ENCODE measurements at regions of chr11 and their contacts with region 1.

Region 1: DNA sequence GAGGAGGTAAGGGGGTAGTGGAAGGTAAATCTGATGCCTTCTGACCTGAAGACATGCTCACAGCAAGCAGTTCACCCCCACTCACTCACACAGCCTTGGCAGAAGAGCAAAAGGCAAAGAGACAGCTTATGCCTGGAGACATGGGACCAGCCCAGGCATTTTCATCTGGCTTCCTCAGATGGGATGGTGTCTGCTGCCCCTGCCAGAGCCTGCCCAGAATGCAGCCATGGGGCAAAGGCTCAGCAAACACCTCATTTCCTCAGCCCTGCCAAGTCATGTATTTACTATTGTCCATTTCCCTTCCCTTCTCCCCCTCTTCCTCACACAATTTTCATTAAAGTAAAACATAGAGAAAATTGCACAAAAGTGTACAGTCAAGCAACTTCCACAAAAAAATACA is 7.7 kb upstream of the FADD start:
- DNase-seq: no peak
- H3K4me3 ChIP-seq: no peak overlapping the region
- H3K27ac ChIP-seq: no peak overlapping the region
- H3K4me1 ChIP-seq: peaks cover 0 to 13% (median 4%) of the 10 kb centered on the region in 6 donors
- H3K27me3 ChIP-seq: peaks cover 0 to 37% (median 7%) of the 10 kb centered on the region in 7 donors
- CTCF ChIP-seq: no peak
- POLR2A ChIP-seq: no peak

Region 2: DNA sequence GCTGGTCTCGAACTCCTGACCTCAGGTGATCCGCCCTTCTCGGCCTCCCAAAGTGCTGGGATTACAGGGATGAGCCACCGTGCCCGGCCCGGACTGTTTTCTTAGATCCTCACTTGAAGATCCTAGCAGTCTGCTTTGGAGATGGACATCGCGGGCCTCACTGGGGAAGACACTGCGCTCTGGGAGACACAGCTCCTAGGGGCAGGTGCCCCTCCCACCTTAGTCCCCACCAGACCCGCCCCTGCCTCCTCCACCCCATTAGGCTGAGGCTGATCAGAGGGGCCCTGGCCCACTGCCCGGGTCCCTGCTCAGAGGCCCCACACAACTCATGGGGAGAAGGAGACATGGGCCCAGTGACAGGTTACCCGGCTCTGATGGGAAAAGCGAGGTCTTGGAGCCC is 508.9 kb before region 1 on chr11:
- intact Hi-C with region 1: loop called (anchors 5 kb)
- DNase-seq: peak; percentile 67
- H3K4me3 ChIP-seq: no peak overlapping the region
- H3K27ac ChIP-seq: no peak overlapping the region
- H3K4me1 ChIP-seq: peaks cover 0 to 11% (median 9%) of the 10 kb centered on the region in 6 donors
- H3K27me3 ChIP-seq: peaks cover 0 to 59% (median 15%) of the 10 kb centered on the region in 7 donors
- CTCF ChIP-seq: no peak
- POLR2A ChIP-seq: no peak

Region 3: DNA sequence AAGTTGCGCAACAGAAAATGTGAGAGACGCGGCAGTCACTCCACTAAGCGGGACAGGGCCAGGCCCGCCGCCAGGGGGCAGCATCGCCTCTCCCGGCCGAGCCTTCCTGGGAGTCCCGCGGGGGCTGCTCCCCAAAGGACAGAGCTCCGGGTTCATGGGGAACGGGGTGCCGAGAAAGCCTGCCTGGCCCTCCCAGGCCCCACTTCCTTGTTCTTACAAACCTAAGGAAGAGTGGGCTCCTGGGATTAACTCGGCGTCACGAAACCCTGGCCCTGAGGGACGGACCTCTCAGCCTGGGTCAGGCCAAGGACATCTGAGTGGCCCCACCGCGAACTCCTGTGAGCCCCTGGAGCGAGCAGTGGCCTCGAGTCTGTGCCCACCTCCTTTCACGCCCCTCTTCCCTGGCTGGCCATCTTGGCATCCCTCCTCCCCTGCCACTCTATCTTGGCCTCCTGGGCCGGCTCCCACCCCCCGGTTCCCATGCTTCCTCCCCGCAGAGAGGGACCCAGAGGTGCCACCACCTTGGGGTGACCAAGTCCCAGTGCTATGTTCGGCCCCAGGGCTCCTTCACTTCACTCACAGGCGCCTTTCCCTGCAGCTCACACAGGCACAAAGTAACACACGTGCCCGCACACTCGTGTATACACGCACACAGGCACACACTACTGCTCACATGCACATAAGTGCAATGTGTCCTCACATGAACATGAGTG is 276.3 kb before region 1 on chr11:
- intact Hi-C with region 1: loop called (anchors 5 kb)
- DNase-seq: peak; percentile 87
- H3K4me3 ChIP-seq: no peak overlapping the region
- H3K27ac ChIP-seq: no peak overlapping the region
- H3K4me1 ChIP-seq: peaks cover 0 to 28% (median 18%) of the 10 kb centered on the region in 6 donors
- H3K27me3 ChIP-seq: peaks cover 0 to 90% (median 21%) of the 10 kb centered on the region in 7 donors
- CTCF ChIP-seq: peak; percentile 46 to 92 (median 85)
- POLR2A ChIP-seq: no peak

Region 4: GRCh38 chr11:70158201-70158600 is 37.2 kb before region 1 on chr11:
- intact Hi-C with region 1: no loop called
- DNase-seq: no peak
- H3K4me3 ChIP-seq: no peak overlapping the region
- H3K27ac ChIP-seq: no peak overlapping the region
- H3K4me1 ChIP-seq: no peaks in the 10 kb centered on the region
- H3K27me3 ChIP-seq: peaks cover 0 to 23% (median 0%) of the 10 kb centered on the region in 7 donors
- CTCF ChIP-seq: no peak
- POLR2A ChIP-seq: no peak

Region 5: DNA sequence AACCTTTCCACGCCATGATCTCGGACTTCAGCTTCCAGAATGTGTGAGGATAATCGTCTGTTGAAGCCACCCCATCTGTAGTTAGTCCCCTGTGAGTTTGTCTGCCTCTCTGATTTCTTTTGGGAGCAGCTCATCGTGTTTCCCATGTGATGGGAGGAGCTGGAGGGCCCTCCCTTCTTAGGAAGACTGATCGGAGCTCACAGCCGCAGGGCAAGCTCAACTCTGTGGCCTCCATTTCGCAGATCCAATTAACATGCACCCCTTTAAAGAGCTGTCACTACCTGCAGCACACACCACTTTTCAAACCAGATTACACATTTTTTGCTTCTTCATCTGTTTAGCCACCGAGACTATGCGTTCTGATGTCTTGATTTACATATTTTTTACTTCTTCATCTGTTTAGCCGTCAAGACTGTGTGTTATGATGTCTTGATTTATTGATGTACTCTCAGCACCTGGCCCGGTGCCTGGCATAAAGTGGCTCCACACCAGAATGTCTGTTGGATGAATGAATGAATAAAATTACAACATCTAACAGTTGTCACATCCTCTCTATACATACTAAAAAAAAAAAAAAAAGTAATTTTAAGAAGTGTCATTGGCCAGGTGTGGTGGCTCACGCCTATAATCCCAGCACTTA is 60.2 kb after region 1 on chr11:
- intact Hi-C with region 1: no loop called
- DNase-seq: no peak
- H3K4me3 ChIP-seq: no peak overlapping the region
- H3K27ac ChIP-seq: no peak overlapping the region
- H3K4me1 ChIP-seq: peaks cover 0 to 6% (median 0%) of the 10 kb centered on the region in 6 donors
- H3K27me3 ChIP-seq: peaks cover 0 to 21% (median 0%) of the 10 kb centered on the region in 7 donors
- CTCF ChIP-seq: no peak
- POLR2A ChIP-seq: no peak

Measured in spleen (tissue), 13 donors.